Upper lobe of right lung (tissue), 1 donor: ENCODE measurements at regions of chr7 and their contacts with region 1.

Region 1: GRCh38 chr7:138741453-138741735 is 40.2 kb upstream of the SVOPL start:
- DNase-seq: no peak
- ATAC-seq: no peak
- H3K4me3 ChIP-seq: no peak overlapping the region
- H3K27ac ChIP-seq: no peak overlapping the region
- H3K4me1 ChIP-seq: no peaks in the 10 kb centered on the region
- H3K27me3 ChIP-seq: no peaks in the 10 kb centered on the region
- CTCF ChIP-seq: no peak

Region 2: DNA sequence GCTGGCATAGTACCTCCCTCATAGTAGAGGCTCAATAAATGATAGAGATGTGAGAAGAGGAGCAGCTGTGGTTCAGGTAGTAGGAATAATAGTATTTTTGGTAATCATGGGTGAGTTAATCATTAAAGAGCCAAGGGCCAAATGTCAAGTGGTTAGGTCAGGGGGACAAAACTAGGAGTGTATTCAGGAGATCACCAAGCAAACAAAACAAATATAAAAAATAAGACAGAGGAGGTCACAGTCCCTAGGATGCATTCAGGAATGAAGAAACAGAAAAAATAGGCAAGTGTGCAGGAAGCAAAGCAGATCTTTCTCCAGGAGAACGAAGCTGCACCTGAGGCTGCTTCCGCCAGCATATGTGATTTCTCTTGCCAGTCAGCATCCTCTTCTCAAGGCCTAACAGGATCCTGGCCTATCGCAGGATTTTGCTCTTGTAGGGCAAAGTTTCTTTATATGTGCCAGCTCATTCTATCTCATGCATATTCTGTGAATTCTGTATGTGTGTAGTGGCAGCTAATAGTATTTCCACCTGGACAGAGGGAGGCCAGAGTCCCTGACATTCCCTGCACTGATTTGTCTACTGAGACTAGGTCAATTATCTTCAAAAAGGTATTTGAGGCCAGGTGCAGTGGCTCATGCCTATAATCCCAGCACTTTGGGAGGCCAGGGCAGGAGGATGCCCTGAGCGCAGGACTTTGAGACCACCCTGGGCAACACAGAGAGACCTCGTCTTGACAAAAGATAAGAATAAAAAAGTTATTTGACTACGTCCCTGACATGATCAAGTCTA is 582.5 kb before region 1 on chr7:
- intact Hi-C with region 1: loop called (anchors 5 kb)
- DNase-seq: no peak
- ATAC-seq: no peak
- H3K4me3 ChIP-seq: no peak overlapping the region
- H3K27ac ChIP-seq: no peak overlapping the region
- H3K4me1 ChIP-seq: no peaks in the 10 kb centered on the region
- H3K27me3 ChIP-seq: no peaks in the 10 kb centered on the region
- CTCF ChIP-seq: no peak

Region 3: DNA sequence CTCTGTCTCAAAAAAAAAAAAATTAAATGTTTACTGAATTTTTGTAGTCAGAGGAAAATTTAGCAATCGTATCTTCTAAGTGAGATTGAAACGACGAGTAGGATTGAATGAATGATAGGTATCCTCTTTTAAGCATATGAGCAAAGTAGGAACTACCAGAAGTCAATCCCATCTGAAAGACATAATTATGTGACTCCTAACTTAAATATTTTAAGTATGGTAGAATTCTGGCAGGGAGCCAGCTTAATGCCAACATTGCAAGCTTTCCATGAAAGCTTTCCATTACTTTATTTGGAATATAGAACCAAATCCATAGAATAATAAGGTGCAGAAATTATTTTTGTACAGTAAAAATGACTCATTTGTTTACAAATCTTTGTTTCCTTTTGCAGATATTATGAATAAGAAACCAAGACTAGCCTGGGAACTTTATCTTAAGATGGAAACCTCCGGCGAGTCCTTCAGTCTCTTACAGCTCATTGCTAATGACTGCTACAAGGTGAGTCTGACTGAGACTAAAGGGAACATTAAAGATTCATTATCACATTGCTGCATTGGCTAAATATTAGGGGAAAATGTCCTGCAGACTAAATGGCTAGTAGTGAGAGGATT is 439.4 kb after region 1 on chr7:
- intact Hi-C with region 1: no loop called
- DNase-seq: no peak
- ATAC-seq: no peak
- H3K4me3 ChIP-seq: no peak overlapping the region
- H3K27ac ChIP-seq: no peak overlapping the region
- H3K4me1 ChIP-seq: no peaks in the 10 kb centered on the region
- H3K27me3 ChIP-seq: no peaks in the 10 kb centered on the region
- CTCF ChIP-seq: no peak